ENCODE measurements at regions of chr2 and their contacts with region 1.

Region 1: GRCh38 chr2:222318026-222318711 is 19.4 kb upstream of the PAX3 start:
- DNase-seq: no peak
- H3K4me3 ChIP-seq: peak overlapping the region; percentile 47 to 72 (median 52)
- H3K27ac ChIP-seq: peak overlapping the region in 1 of 4 donors; percentile 39
- H3K4me1 ChIP-seq: peaks cover 13 to 30% (median 19%) of the 10 kb centered on the region in 3 donors
- H3K27me3 ChIP-seq: peaks cover 3 to 94% (median 15%) of the 10 kb centered on the region in 4 donors
- CTCF ChIP-seq: peak in 5 of 6 experiments; percentile 27 to 67 (median 36)
- POLR2A ChIP-seq: no peak

Region 2: DNA sequence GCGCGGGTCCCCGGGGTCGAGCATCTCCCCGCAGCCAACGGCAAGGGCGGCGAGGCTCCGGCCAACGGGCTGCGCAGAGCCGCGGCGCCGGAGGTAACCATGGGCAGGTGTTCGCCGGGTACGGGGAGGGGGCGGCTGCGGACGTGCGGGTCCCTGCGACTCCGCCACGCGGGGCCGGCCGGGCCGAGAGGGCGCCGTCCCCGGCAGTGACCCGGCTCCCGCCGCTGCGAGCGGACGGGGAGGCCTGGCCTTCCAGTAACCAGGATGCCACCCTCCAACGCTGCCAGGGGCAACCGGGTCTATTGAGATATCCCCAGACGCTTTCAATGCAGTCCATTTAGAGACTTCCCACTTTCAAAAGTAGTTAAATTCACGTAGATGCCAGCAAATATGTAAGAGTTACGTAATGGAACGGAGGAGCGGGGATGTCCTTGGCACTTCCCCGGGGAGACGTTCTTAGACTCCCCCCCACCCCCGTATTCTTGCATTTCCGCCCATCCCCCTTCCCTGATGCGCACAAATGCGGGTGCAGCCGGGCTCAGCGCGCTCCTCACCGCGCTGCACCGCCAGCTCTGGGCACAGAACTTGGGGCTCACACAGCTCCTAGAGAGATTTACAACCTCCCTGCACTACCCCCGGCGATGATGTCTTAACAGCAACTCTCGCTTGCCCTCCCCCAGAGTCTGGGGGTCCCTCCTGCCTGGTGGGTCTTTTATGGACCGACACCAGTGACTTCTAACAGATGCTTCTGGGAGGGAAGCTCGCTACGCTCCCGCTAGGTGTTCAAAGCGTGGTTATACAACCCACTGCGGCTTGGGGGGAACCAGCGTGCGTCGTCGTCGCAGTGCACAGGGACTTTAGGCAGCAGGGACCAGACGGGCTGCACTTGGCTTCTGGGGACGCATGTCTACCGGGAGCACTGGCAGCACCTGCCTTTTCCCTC is 106.8 kb after region 1 on chr2:
- intact Hi-C with region 1: loop called (anchors 5 kb)
- DNase-seq: no peak
- H3K4me3 ChIP-seq: peak overlapping the region; percentile 62 to 97 (median 76)
- H3K27ac ChIP-seq: peak overlapping the region; percentile 80 to 95 (median 88)
- H3K4me1 ChIP-seq: peaks cover 7 to 62% (median 18%) of the 10 kb centered on the region in 3 donors
- H3K27me3 ChIP-seq: peaks cover 0 to 47% (median 2%) of the 10 kb centered on the region in 4 donors
- CTCF ChIP-seq: no peak
- POLR2A ChIP-seq: no peak

Region 3: DNA sequence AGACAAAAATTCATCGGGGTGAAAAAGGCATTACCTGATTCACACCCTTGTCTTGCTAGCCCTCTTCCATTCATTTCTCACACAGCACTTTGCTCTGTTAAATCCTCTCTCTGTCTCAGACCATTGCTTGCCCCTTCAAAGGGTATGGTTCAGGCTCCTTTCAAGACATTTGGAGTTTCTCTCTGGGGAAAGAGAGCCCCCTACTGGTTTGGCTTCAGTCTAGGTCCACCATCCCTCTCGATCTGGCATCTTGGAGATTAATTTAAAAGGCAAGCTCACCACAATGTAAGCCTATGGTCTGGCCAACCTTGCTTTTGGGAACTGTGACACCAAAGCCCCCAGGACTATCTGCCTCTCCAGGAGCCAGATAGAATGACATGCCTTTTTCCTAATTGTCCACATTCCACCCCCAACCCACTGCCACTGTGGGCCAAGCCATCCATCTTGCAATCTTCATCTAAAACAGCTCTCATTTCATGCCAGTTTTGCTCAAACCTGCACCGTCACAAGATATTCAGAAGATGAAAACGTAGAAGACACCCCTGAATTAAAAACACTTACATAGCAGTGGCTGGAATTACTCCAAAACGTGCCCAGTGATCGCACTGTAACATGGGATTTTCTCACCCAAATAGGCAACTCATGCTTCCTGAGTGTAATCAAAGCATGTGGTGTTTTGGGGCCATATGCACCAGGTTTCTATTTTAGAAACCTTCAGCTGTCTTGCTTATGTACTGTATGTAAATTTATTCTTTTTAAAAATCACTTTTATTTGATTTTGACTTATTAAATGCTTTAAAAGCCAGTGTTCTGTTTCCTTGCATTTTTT is 243.9 kb after region 1 on chr2:
- intact Hi-C with region 1: loop called (anchors 5 kb)
- DNase-seq: no peak
- H3K4me3 ChIP-seq: no peak overlapping the region
- H3K27ac ChIP-seq: no peak overlapping the region
- H3K4me1 ChIP-seq: no peaks in the 10 kb centered on the region
- H3K27me3 ChIP-seq: no peaks in the 10 kb centered on the region
- CTCF ChIP-seq: peak in 5 of 6 experiments; percentile 54 to 72 (median 59)
- POLR2A ChIP-seq: no peak

Region 4: DNA sequence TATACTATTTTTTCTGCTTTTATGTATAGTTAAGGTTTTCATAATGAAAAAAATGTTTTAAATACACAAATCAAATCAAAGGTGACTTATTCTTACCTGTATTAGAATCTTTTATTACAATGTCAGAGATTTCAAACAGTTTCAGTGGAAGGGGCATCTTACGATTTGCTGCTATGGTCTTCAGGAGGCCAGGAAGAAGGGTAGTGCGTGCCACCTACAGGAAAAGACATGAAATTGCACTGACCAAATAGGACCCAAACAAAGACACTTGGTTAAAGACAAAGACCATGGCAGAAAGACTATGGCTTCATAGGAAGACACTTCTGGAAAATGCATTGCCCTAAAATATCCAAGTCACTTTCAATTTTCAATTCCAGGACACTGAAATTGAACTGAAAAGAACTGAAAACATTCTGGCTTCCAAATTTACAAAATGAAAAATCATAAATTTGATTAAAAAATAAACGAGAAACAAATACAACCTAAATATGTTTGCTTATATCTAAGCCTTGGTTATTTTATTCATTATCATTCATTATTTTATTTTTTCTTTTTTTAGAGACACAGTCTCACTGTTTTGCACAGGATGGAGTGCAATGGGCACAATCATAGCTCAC is 295.7 kb after region 1 on chr2:
- intact Hi-C with region 1: loop called (anchors 5 kb)
- DNase-seq: no peak
- H3K4me3 ChIP-seq: no peak overlapping the region
- H3K27ac ChIP-seq: no peak overlapping the region
- H3K4me1 ChIP-seq: no peaks in the 10 kb centered on the region
- H3K27me3 ChIP-seq: no peaks in the 10 kb centered on the region
- CTCF ChIP-seq: peak; percentile 49 to 73 (median 64)
- POLR2A ChIP-seq: no peak